Activated T-helper 1 cell treated with anti-CD3 and anti-CD28 coated beads, Interleukin-12 subunit alpha, Interleukin-12 subunit beta, Interleukin-2, Interleukin-4 antibody, amounts not matched to agents 30 ng/mL and 10 ng/mL and 1 ng/mL, durations not matched to agents 14 hours and 24 hours and 36 hours (primary cell): ENCODE measurements at regions of chr9 and their contacts with region 1.

Region 1: GRCh38 chr9:127224178-127224882 is 40.2 kb upstream of the GARNL3 start:
- DNase-seq: peak; percentile 82
- H3K4me3 Mint-ChIP-seq: peak overlapping the region; percentile 85
- H3K27ac Mint-ChIP-seq: peak overlapping the region; percentile 97
- H3K4me1 Mint-ChIP-seq: peaks cover 18% of the 10 kb centered on the region
- H3K27me3 Mint-ChIP-seq: peaks cover 42% of the 10 kb centered on the region

Region 2: GRCh38 chr9:126722252-126723078 is 501.9 kb before region 1 on chr9:
- intact Hi-C with region 1: loop called (anchors 2 kb)
- DNase-seq: peak; percentile 80
- H3K4me3 Mint-ChIP-seq: peak overlapping the region; percentile 88
- H3K27ac Mint-ChIP-seq: peak overlapping the region; percentile 74
- H3K4me1 Mint-ChIP-seq: peaks cover 35% of the 10 kb centered on the region
- H3K27me3 Mint-ChIP-seq: peaks cover 10% of the 10 kb centered on the region

Region 3: DNA sequence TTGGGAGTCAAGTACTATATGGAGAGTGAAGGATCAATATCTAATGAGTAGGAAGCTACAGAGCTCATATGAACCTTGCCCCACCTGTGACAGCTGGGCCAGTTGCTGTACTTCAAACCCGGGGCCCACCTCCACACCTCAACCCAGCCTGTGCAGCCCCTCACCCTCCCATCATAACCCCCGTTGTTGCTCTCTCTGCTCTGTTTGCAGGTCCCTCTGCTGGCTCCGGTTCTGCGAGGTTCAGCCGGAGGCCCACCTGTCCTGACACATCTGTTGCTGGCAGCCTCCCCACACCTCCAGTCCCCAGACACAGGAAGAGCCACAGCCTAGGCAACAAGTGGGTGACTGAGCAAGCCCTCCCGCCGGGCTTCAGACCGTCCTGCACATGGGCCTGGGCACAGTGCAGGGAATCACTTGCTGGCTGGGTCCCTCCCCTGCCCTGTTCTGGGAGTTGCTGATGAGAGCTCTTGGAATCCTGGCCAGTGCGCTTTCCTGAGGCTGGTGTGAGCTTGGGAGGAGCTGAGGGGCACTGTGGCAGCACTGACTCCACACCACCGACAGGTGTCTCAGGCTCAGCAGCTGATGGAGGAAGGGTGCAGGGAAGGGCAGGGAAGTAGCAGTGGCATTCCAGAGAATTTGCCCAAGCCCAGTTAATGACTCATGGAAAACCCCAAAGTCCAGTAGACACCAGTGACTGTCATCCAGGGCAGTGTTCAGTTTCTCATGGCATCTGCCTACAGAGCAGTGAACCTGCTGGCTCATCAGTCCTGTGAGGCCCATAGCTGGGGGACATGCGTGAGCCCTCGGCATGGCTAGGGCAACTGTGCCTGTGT is 29.2 kb before region 1 on chr9:
- intact Hi-C with region 1: no loop called
- DNase-seq: no peak
- H3K4me3 Mint-ChIP-seq: no peak overlapping the region
- H3K27ac Mint-ChIP-seq: no peak overlapping the region
- H3K4me1 Mint-ChIP-seq: peaks cover 8% of the 10 kb centered on the region
- H3K27me3 Mint-ChIP-seq: peaks cover 22% of the 10 kb centered on the region

Region 4: DNA sequence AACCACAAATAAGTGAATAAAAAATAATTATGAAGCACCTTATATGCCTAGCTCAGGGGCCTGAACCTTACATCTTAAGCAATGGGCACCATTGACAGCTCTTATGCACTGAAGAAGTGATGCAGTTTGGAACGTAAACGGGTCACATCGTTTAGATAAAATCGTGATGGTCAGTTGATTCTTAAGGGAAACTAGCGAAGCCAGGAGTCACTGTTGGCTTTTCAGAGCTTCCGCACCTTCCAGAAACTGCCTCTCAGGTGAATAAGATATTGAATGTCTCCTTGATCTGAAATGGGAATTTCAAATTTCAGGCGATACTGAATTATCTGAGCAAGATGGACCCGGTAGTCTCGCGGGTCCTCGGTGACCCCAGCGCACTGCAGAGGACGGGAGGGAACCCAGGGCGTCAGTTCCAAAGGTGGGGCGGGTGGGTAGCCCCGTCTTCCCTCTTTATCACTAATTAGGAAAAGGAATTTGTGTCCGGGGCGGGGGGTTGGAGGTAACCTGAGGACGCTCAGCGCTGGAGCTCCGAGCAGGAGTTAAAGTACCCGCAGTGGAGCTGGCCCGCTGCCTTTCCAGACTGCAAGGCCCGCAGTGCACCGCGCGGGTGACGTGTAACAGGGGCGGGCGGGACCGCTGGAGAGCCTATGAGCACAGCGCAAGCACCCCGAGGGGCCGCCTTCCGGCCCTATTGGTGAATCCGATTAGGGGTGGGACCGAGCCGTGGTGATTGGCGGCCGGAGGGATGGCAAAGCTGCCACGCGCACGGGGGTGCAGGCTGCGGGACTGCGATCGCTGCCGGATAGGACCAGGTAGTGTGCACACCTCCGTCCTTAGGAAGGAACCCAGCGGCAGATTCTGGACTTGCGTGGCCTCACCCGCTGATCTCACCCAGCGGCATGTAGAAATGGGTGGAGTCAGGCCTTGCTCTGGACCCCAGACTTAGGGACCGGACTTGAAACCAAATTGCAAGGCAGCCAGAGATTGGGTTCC is 20.6 kb after region 1 on chr9:
- intact Hi-C with region 1: loop called (anchors 1 kb)
- DNase-seq: peak; percentile 94
- H3K4me3 Mint-ChIP-seq: peak overlapping the region; percentile 83
- H3K27ac Mint-ChIP-seq: peak overlapping the region; percentile 21
- H3K4me1 Mint-ChIP-seq: peaks cover 12% of the 10 kb centered on the region
- H3K27me3 Mint-ChIP-seq: peaks cover 9% of the 10 kb centered on the region

Region 5: DNA sequence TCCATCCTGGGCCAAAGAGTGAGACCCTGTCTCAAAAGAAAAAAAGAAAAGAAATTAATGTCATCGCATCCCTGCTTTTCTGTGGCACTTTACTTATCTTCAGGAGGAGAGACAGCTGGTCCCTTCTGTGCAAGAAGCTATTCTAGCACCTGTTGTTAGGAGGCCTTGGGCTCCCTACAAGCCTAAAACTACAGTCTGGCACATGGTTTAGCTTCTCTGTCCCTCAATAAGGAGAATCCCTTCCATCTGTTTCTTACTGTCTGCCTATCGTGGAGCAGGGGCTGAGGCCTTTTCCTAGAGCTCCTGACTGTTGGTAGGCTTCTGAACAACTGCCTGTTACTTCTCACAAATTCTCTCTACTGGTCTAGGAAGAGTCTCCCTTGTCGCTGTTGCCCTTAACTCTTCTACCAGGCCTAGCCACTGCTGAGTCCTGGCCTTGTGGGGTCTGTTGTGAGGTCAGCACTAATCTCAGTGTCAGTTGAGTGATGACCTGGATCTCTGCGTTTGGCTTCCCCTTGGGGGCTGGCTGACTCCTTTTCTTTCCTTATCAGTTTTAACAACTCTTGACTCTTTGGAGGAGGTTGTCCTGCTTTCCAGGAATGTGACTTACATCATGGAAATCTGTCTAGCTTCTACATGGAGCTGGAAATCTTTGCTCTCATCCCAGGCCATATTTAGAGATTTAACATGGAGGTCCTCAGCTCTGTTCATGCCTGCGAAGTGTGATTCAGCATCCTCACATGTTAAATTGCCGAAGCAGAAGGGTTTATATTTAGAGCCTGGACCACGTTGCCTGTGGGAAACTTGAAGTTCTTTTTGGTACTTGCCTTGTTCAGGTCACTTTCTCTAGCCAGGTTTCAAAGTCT is 34.5 kb after region 1 on chr9:
- intact Hi-C with region 1: no loop called
- DNase-seq: no peak
- H3K4me3 Mint-ChIP-seq: no peak overlapping the region
- H3K27ac Mint-ChIP-seq: no peak overlapping the region
- H3K4me1 Mint-ChIP-seq: no peaks in the 10 kb centered on the region
- H3K27me3 Mint-ChIP-seq: peaks cover 25% of the 10 kb centered on the region

Region 6: DNA sequence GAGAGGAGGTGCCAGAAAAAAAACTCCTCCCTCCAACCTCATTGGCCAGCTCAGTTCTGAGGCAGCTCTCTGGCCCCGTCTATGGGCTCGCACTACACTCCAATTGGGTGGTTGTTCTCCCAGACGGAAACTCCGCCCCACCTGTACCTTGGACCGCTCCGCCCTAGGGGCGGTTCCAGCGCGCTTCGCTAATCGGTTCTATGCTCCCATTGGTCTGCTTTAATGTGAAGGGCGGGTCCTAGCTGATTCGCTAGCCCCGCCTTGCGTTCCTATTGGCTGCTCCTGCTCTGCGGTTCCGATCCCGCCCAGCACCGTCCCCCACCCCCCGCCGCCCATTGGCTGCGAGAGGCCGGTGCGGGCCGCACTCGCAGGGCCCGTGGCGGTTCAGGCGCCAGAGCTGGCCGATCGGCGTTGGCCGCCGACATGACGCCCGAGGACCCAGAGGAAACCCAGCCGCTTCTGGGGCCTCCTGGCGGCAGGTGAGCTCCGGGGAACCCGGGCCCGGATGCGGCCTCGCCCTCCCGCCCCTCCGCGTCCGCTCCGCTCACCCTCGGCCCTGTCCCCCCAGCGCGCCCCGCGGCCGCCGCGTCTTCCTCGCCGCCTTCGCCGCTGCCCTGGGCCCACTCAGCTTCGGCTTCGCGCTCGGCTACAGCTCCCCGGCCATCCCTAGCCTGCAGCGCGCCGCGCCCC is 172.6 kb after region 1 on chr9 and contains the start of gene SLC2A8:
- intact Hi-C with region 1: loop called (anchors 1 kb)
- DNase-seq: peak; percentile 96
- H3K4me3 Mint-ChIP-seq: peak within 1 kb of the TSS; percentile 79
- H3K27ac Mint-ChIP-seq: no peak within 1 kb of the TSS
- H3K4me1 Mint-ChIP-seq: peaks cover 18% of the 10 kb centered on the region
- H3K27me3 Mint-ChIP-seq: peaks cover 57% of the 10 kb centered on the region
- total RNA-seq, gene SLC2A8: 10.4 and 11.6 TPM in 2 replicates

Region 7: DNA sequence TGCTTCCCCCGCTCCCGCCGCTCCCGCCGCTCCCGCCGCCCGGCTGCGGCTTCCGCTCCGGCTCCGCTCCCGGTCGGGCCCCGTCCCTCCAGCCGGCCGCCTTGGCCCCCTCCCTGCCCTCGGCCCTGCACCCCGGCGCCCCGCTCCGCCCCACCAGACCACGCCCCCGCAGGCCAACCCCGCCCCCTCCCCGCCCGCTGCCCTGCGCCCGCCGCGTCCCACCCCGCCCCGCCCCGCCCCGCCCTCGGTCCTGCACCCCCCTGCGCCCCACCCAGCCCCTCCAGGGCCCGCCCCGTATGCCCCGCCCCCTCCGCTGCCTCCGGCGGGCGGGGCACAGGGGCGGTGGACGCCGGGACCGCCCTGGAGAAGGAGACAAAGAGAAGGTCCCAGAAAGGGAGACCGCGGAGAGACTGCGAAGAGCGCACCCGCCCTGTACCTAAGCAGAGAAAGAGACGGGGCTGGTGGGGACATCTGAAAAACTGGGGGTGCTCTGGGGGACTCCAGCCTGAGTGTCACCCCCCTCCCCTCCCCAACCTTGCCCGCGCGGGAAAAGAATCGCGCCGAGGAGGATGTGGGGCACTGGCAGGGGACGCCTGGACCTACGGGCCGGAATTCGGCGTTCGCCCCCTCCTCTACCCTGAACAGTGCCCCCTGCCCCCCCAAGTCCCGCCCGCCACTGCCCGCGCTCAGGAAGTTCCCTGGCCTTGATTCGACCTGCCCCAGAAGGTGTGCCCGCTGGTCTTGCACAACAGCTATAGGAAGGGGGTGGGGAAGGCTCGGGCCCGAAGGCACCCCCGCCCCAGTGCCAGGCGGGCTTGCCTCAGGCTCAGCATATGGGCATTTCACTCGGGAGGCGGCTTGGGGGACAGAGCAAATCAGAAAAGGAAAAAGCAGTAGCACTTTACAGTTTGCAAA is 344.9 kb after region 1 on chr9:
- intact Hi-C with region 1: loop called (anchors 2 kb)
- DNase-seq: peak; percentile 78
- H3K4me3 Mint-ChIP-seq: peak overlapping the region; percentile 85
- H3K27ac Mint-ChIP-seq: peak overlapping the region; percentile 87
- H3K4me1 Mint-ChIP-seq: peaks cover 49% of the 10 kb centered on the region
- H3K27me3 Mint-ChIP-seq: no peaks in the 10 kb centered on the region